Heart left ventricle (tissue), 16 donors: ENCODE measurements at regions of chr11 and their contacts with region 1.

Region 1: GRCh38 chr11:94794287-94795168 is 26.4 kb downstream of the AMOTL1 start:
- DNase-seq: peak in 4 of 5 donors; percentile 69 to 77 (median 74)
- ATAC-seq: peak; percentile 88 to 95 (median 93)
- H3K4me3 ChIP-seq: peak overlapping the region in 3 of 12 donors; percentile 10 to 14 (median 11)
- H3K27ac ChIP-seq: peak overlapping the region; percentile 33 to 79 (median 60)
- H3K4me1 ChIP-seq: peaks cover 4 to 76% (median 40%) of the 10 kb centered on the region in 12 donors
- H3K27me3 ChIP-seq: no peaks in the 10 kb centered on the region
- CTCF ChIP-seq: no peak
- POLR2A ChIP-seq: no peak

Region 2: GRCh38 chr11:94834911-94835593 is 40.5 kb after region 1 on chr11:
- intact Hi-C with region 1: loop called in 1 of 10 experiments (anchors 5 kb)
- DNase-seq: no peak
- ATAC-seq: no peak
- H3K4me3 ChIP-seq: no peak overlapping the region
- H3K27ac ChIP-seq: peak overlapping the region in 4 of 12 donors; percentile 0 to 52 (median 18)
- H3K4me1 ChIP-seq: peaks cover 0 to 38% (median 20%) of the 10 kb centered on the region in 12 donors
- H3K27me3 ChIP-seq: no peaks in the 10 kb centered on the region
- CTCF ChIP-seq: no peak
- POLR2A ChIP-seq: no peak

Region 3: DNA sequence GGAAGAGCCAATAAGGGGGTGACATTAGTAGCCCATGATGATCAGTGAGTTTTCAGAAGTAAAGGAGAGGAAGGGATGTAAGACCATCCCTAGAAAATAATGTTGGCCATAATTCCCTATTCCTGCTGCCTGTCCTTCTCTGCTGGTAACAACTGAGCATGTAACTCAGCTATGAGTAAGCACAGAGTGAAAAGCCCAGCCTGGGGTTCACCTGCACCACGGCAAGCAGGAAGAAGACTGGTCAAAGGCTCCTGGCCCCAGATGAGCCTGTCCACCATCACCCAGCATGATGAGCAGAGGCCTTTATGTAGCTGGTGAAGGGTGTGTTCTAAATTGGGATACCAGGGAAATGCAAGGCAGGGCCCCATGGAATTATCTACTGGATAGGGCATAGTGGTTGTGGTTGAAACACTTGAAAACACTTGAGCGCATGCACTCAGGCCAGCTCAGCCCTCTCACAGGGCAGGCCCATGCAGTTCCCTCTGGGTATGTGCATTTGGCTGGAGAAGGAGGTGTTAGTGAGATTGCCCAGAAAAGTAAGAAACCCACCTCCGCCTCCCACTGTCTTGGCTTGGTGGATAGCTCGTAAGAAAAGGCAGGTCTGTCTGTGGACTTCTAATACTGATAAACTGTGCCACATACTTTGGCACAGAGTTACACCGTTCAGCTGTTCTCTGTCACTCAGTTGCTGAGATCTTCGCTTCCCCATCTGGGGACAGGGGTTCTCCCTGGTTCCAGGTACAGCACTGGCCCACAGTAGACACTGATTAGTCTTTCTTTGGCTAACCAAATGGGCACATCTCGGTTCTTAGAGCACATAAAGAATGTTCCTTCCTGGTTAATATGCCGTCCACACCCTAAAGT is 60.5 kb after region 1 on chr11:
- intact Hi-C with region 1: loop called in 1 of 10 experiments (anchors 5 kb)
- DNase-seq: peak in 4 of 5 donors; percentile 55 to 80 (median 67)
- ATAC-seq: peak; percentile 96 to 98 (median 98)
- H3K4me3 ChIP-seq: no peak overlapping the region
- H3K27ac ChIP-seq: peak overlapping the region in 1 of 12 donors; percentile 24
- H3K4me1 ChIP-seq: peaks cover 0 to 29% (median 5%) of the 10 kb centered on the region in 12 donors
- H3K27me3 ChIP-seq: no peaks in the 10 kb centered on the region
- CTCF ChIP-seq: no peak
- POLR2A ChIP-seq: no peak